Astrocyte of the cerebellum (primary cell): ENCODE measurements at regions of chr14 and their contacts with region 1.

Region 1: DNA sequence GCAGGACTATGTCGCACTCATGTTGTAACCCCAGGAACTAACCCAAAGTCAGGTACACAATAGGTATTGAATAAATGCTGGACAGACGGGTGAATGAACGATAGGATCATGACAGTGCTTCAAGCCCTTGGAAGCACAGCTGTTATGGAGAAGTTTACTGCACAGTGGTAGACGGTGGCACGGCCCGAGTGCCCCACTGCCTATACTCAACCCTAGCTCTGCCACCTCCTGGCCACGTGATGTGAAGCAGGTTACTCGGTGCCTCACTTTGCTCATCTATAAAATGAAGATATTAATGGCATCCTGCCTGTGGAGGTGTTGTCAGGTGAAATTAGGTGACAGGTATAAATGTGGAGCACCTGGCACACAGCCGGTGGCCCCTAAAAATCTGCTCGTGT is 5.8 kb downstream of the ASB2 start:
- DNase-seq: no peak
- H3K4me3 ChIP-seq: no peak overlapping the region
- CTCF ChIP-seq: peak; percentile 15

Region 2: DNA sequence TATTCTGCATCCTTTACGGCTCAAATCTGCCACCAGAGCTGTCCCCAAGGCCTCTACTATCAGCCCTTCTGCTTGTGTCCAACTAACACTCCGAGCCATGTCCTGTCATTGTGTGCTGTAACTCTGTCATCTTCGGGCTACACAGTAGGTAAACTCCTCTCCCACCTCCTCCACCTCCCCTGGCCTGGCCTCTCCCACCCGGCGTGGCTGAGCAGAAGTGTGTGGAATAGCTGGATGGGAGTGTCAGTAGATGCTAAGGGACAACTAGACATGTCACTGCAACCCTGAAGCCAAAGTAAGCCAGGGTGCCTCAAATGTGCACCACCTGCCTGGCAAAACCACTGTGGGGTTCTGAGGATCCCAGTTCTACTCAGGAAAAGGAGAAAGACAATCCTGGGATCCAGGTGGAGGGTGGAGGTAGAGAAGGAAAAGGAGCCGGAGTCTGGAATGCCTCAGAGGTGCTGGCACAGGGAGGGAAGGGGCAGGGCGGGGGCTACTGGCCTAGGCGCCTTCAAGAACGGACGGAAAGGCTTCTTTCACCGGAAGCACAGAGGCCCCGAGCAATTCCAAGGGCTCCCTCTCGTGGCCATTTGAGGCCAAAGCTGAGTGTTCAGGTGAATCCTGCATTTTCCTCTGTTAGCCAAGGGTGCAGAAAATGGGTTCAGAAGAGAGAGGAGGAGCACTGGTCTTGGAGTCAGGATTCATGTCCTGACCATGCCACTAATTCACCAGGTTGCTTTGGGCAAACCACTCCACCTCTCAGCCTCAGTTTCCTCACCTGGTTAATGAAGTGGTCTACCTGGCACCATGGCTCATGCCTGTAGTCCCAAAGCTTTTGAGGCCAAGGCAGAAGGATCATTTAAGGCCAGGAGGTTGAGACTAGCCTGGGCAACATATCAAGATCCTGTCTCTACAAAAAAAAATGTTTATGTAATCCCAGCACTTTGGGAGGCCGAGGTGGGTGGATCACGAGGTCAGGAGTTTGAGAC is 63.9 kb before region 1 on chr14:
- in situ Hi-C with region 1: no loop called
- DNase-seq: no peak
- H3K4me3 ChIP-seq: no peak overlapping the region
- CTCF ChIP-seq: peak; percentile 74

Region 3: DNA sequence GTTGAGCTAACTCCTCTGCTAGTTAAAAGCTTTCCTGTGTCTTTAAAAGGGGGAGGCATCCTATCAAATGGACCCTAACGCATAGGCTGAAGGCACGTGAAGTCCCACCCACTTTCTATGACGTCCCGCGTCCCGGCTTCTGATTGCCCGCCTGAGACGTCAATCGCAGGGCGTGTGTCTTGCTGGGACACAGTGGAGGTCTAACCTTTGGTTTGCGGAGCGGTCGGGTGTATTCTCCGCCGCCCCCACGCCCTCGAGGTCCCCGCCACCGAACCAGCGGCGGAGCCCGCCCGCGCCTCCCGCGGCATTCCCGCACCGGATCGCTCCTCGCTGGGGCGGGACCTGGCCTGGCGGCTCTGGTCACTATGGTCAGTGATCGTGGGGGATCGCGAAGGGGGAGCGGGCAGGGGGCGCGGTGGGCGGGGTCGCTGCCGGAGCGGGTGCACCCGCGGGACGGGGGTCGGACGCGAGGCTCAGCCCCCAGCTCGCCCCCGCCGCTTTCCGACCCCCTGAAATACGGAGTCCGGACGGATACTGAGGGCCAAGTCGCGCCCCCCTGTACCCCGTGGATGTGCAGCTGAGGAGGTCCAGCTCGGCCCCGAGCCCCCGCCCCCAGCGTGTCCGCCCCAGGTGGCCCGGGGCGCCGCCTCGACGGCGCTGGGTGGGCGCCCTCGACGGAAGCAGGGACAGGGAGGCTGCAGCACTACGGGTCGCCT is 55.8 kb after region 1 on chr14 and contains the start of gene OTUB2:
- in situ Hi-C with region 1: loop called (anchors 5 kb)
- DNase-seq: peak; percentile 96
- H3K4me3 ChIP-seq: peak within 1 kb of the TSS; percentile 58
- CTCF ChIP-seq: no peak